PC-9 (cell line): ENCODE measurements at regions of chr3 and their contacts with region 1.

Region 1: GRCh38 chr3:154242742-154243141 is 81.5 kb downstream of the DHX36 start:
- DNase-seq: no peak
- H3K4me3 ChIP-seq: no peak overlapping the region
- H3K27ac ChIP-seq: no peak overlapping the region
- H3K4me1 ChIP-seq: no peaks in the 10 kb centered on the region
- H3K27me3 ChIP-seq: no peaks in the 10 kb centered on the region
- CTCF ChIP-seq: no peak

Region 2: GRCh38 chr3:154210986-154211385 is 31.8 kb before region 1 on chr3:
- CTCF ChIA-PET with region 1: interaction called, 13 read pairs
- POLR2A ChIA-PET with region 1: no interaction called
- intact Hi-C with region 1: no loop called
- DNase-seq: no peak
- H3K4me3 ChIP-seq: no peak overlapping the region
- H3K27ac ChIP-seq: no peak overlapping the region
- H3K4me1 ChIP-seq: no peaks in the 10 kb centered on the region
- H3K27me3 ChIP-seq: no peaks in the 10 kb centered on the region
- CTCF ChIP-seq: no peak